ENCODE measurements at regions of chr12 and their contacts with region 1.

Region 1: DNA sequence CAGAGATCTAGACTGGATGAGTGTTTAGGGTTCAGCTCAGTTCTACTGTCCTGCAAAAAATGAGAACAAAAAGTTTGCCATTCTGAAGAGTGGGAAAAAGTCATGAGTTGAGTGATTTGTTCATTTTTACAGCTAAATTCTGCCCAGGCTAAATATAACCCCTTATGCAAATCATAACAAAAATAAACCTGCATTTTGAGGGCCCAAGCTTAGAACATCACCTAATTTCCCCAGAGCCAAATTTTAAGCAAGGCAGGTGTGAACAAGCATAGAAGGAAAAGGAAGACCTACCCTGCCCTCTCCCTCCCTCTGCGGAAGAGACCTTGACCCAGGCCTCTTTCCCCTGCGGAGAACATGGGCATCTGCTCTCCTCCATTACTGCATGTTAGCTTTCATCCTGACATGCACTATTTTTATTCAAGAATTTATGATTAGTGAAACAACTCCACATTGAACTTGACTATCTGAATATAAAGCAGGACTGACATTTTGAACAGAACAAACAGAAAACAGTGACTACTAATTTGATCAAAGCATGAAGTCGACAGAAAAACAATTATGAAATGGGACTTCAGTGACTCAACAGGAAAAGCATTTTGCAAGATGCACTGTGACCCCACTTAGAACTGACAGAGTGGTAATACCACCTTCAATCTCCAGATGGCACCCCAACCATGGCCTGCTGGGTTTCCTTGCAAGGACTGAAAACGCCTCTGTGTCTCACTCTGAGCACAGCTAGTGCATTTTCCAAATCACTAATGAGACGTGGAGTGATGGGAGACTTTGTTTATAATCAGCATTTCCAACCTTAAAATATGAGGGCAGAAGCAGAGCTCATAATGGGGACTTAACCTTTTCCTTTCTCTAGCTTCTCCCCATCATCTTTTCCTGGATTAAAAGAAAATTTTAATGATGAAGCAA is 30.9 kb upstream of the SELPLG start:
- DNase-seq: peak; percentile 93 to 97 (median 96)
- H3K4me3 ChIP-seq: peak overlapping the region in 2 of 7 experiments; percentile 0 to 44
- H3K27ac ChIP-seq: peak overlapping the region; percentile 62 to 79
- H3K4me1 ChIP-seq: peaks cover 31 to 44% (median 38%) of the 10 kb centered on the region in 4 experiments
- H3K27me3 ChIP-seq: no peaks in the 10 kb centered on the region

Region 2: GRCh38 chr12:108562348-108563135 is 102.1 kb before region 1 on chr12 and contains the start of gene ISCU:
- CTCF ChIA-PET with region 1: interaction called, 24 read pairs
- POLR2A ChIA-PET with region 1: no interaction called
- DNase-seq: peak; percentile 96 to 98 (median 97)
- H3K4me3 ChIP-seq: peak within 1 kb of the TSS; percentile 90 to 100 (median 99)
- H3K27ac ChIP-seq: peak within 1 kb of the TSS; percentile 96 to 99
- H3K4me1 ChIP-seq: peaks cover 41 to 79% (median 66%) of the 10 kb centered on the region in 4 experiments
- H3K27me3 ChIP-seq: no peaks in the 10 kb centered on the region

Region 3: GRCh38 chr12:108618079-108618952 is 46.3 kb before region 1 on chr12:
- CTCF ChIA-PET with region 1: interaction called, 20 read pairs
- POLR2A ChIA-PET with region 1: no interaction called
- DNase-seq: peak; percentile 76 to 84 (median 82)
- H3K4me3 ChIP-seq: no peak overlapping the region
- H3K27ac ChIP-seq: no peak overlapping the region
- H3K4me1 ChIP-seq: peaks cover 3 to 47% (median 20%) of the 10 kb centered on the region in 4 experiments
- H3K27me3 ChIP-seq: no peaks in the 10 kb centered on the region

Region 4: DNA sequence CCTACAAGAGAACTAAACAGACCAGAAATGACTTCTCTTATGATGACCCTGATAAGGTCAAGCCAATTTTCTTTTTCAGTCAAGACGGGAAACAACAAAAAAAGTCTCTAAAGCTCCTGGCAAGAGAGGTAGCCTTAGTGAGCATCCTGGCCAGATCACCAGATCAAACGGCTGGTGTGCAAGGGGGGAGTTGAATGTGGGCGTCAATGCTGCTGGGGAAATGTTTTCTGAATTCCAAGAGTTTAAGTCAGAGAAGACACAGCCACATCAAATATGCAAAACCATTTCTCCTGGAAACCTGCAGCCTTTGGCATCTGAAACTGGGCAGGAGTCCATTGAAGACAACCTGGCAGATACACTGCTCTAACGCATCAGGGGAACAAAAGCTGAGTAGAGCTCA is 14.9 kb before region 1 on chr12:
- CTCF ChIA-PET with region 1: interaction called, 11 read pairs
- POLR2A ChIA-PET with region 1: no interaction called
- DNase-seq: no peak
- H3K4me3 ChIP-seq: no peak overlapping the region
- H3K27ac ChIP-seq: no peak overlapping the region
- H3K4me1 ChIP-seq: peaks cover 6 to 35% (median 23%) of the 10 kb centered on the region in 4 experiments
- H3K27me3 ChIP-seq: no peaks in the 10 kb centered on the region

Region 5: DNA sequence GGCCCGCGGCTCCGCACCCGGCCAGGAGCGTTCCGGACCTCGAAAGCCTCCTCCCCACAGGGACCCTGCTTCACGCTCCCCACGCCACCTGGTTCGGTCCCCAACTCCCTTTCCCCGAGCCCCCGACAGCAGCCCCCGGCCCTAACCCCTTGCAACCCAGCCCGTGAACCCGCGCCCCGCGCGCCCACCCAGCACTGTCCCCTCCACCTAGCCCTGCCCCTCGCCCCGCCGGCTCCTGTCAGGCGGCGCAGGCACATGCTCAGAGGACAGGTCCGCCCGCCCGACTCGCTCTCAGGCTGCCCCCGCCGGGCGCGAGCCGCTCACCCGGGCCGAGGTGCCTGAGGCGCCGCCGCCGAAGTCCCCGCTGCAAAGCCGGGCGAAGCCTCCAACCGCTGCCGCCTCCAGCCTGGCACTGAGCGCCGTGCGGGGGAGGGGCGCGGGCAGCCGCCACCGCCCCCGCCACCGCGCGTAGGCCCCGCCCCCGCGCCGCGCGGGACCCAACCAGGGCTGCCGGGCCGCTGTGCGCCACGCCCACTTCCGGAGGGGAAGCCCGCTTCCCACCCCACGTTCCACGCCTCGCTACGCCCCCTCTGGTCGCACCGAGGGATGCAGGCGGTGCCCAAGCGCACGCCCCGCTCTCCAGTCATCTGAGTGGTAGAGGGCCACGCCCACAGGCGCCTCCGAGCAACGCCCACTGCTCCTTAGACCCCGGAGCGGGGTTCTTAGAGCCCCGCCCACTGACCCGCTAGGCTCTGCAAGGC is 66.7 kb after region 1 on chr12 and contains the start of gene CORO1C:
- CTCF ChIA-PET with region 1: interaction called, 10 read pairs
- POLR2A ChIA-PET with region 1: interaction called, 4 read pairs
- DNase-seq: peak; percentile 94 to 98 (median 97)
- H3K4me3 ChIP-seq: peak within 1 kb of the TSS; percentile 64 to 94 (median 85)
- H3K27ac ChIP-seq: peak within 1 kb of the TSS; percentile 66 to 85
- H3K4me1 ChIP-seq: peaks cover 20 to 45% (median 32%) of the 10 kb centered on the region in 4 experiments
- H3K27me3 ChIP-seq: no peaks in the 10 kb centered on the region

Region 6: GRCh38 chr12:108850854-108851573 is 186.4 kb after region 1 on chr12:
- CTCF ChIA-PET with region 1: interaction called, 13 read pairs
- POLR2A ChIA-PET with region 1: no interaction called
- DNase-seq: peak; percentile 78 to 87 (median 83)
- H3K4me3 ChIP-seq: no peak overlapping the region
- H3K27ac ChIP-seq: peak overlapping the region in 1 of 2 experiments; percentile 12
- H3K4me1 ChIP-seq: peaks cover 4 to 49% (median 20%) of the 10 kb centered on the region in 4 experiments
- H3K27me3 ChIP-seq: no peaks in the 10 kb centered on the region

Region 7: DNA sequence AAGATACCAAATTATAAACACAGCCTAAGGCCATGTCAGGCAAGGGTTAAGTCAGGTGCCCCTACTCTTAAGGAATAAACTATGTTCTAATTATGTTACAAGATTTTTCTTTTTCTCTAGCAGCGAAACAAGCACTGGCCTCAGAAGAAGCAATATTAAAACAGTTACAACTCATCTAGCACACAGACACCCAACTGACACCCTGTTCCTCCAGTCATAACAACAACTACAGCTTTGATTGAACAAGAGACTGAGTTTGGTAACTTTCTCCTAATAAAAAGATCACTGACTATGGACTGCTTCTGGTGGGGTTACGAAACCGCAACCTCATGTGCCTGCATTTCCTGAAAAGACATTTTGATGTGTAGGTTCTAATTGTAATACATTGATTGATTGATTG is 212.0 kb after region 1 on chr12:
- CTCF ChIA-PET with region 1: no interaction called
- POLR2A ChIA-PET with region 1: no interaction called
- DNase-seq: no peak
- H3K4me3 ChIP-seq: no peak overlapping the region
- H3K27ac ChIP-seq: no peak overlapping the region
- H3K4me1 ChIP-seq: peaks cover 0 to 19% (median 0%) of the 10 kb centered on the region in 4 experiments
- H3K27me3 ChIP-seq: no peaks in the 10 kb centered on the region

Region 8: GRCh38 chr12:108890212-108890611 is 225.6 kb after region 1 on chr12:
- CTCF ChIA-PET with region 1: no interaction called
- POLR2A ChIA-PET with region 1: no interaction called
- DNase-seq: peak in 2 of 3 donors; percentile 31 to 37
- H3K4me3 ChIP-seq: no peak overlapping the region
- H3K27ac ChIP-seq: no peak overlapping the region
- H3K4me1 ChIP-seq: no peaks in the 10 kb centered on the region
- H3K27me3 ChIP-seq: no peaks in the 10 kb centered on the region

Measured in common myeloid progenitor, CD34-positive (primary cell).